ENCODE measurements at regions of chr7 and their contacts with region 1.

Region 1: DNA sequence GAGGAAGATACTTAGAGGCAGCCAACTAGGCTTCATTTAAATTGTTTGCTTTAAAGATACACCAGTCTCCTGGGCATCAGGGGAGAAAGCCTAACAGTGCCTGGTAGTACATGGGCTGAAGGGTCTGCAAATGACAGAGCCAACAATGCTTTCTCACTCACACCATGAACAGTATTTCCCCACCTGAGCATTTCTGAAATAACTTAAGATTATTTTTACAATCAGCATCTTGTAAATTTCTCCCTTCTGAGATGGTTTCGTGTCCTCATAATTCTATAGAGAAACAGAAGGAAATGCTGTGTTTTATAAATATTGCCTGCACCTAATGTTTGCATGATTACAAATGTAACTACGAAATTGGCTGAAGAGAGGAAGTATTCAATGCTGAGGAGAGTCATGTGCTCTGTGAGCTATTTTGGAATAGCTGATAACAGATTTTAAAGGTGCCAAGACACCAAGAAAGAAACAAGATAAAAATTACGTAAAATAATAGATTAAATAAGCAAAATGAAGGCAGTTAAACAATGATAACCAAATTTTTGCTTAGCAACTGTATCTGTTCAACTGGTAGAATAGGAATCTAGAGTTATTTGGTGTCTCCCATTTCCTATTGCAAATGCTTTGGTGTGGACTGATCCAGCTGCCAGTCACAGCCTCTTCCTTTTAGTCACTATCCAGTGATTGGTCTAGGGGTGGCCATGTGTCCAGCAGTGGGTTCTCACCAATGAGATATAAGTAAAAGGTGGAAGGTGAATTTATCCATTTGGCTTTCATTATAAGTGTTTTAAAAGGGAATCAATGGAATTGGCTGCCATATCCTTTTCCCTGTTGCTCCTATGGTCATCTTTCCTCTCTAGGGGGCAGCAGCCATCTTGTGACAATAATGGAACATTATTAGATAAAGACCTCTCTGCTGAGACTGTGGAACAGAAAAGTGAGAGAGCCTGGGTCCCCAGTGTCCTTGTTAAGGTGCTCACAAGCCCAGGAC is 167.9 kb upstream of the SLC26A5 start:
- DNase-seq: no peak
- H3K4me3 ChIP-seq: no peak overlapping the region
- H3K27ac ChIP-seq: no peak overlapping the region
- H3K4me1 ChIP-seq: no peaks in the 10 kb centered on the region
- H3K27me3 ChIP-seq: no peaks in the 10 kb centered on the region
- CTCF ChIP-seq: peak in 2 of 3 experiments; percentile 22 to 29; a peak in 2 of 4 replicates
- EP300 ChIP-seq: no peak
- POLR2A ChIP-seq: no peak
- RAD21 ChIP-seq: peak; percentile 48 to 56

Region 2: DNA sequence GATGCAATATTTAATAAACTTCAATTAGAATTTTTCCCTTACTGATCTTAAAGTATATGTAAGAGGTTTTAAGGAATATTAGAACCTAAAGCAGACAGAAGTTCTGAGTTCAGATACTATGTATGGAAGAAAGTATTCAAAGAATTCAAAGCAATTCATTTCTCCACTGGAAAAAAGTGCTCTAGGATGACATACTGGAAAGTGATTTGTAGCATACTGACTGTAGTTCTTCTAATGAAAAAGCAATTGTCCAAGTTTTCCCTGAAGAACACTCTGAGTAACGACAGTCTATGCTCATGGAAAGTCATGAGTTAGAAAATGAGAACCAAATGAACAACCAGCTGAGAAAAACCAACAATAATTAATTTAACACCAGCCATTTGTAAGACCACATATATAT is 12.8 kb after region 1 on chr7:
- CTCF ChIA-PET with region 1: interaction called, 29 read pairs
- POLR2A ChIA-PET with region 1: interaction called, 3 read pairs
- DNase-seq: no peak
- H3K4me3 ChIP-seq: no peak overlapping the region
- H3K27ac ChIP-seq: no peak overlapping the region
- H3K4me1 ChIP-seq: no peaks in the 10 kb centered on the region
- H3K27me3 ChIP-seq: no peaks in the 10 kb centered on the region
- CTCF ChIP-seq: no peak
- EP300 ChIP-seq: no peak
- POLR2A ChIP-seq: no peak
- RAD21 ChIP-seq: no peak

Measured in H1 (cell line).